Activated CD4-positive, alpha-beta memory T cell treated with anti-CD3 and anti-CD28 coated beads for 36 hours (primary cell): ENCODE measurements at regions of chr5 and their contacts with region 1.

Region 1: GRCh38 chr5:151651997-151652645 is 34.6 kb downstream of the SPARC start:
- DNase-seq: peak; percentile 86
- H3K4me3 Mint-ChIP-seq: no peak overlapping the region
- H3K27ac Mint-ChIP-seq: no peak overlapping the region
- H3K4me1 Mint-ChIP-seq: peaks cover 5% of the 10 kb centered on the region
- H3K27me3 Mint-ChIP-seq: no peaks in the 10 kb centered on the region

Region 2: DNA sequence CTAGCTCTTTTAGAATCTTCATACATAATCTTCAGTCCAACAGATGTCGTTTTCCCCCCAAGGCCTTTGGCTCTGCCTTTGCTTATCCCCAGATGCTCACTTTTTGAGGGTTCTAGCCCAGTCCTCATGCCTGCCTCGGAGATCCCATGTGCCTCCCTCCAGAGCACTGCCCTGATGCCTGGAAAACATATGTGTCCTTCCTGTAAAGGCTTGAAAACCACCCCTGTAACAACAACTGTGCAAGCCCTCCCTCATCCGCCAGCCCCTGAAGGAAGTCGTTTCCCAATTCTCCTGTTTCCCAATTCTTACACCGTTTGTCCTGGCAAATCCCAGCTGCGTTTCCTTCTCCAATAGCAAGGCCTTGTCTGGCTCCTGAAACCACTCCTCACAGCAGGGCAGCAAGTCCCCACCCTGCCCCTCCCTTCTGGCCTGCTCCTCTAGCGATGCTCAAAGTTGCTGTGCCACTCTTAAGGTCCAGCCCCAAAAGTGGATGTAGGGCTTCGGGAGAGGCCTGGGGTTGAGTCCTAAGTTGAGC is 152.6 kb before region 1 on chr5:
- CTCF ChIA-PET with region 1: interaction called, 7 read pairs
- POLR2A ChIA-PET with region 1: no interaction called
- intact Hi-C with region 1: loop called (anchors 2 kb)
- DNase-seq: no peak
- H3K4me3 Mint-ChIP-seq: no peak overlapping the region
- H3K27ac Mint-ChIP-seq: no peak overlapping the region
- H3K4me1 Mint-ChIP-seq: peaks cover 5% of the 10 kb centered on the region
- H3K27me3 Mint-ChIP-seq: no peaks in the 10 kb centered on the region

Region 3: DNA sequence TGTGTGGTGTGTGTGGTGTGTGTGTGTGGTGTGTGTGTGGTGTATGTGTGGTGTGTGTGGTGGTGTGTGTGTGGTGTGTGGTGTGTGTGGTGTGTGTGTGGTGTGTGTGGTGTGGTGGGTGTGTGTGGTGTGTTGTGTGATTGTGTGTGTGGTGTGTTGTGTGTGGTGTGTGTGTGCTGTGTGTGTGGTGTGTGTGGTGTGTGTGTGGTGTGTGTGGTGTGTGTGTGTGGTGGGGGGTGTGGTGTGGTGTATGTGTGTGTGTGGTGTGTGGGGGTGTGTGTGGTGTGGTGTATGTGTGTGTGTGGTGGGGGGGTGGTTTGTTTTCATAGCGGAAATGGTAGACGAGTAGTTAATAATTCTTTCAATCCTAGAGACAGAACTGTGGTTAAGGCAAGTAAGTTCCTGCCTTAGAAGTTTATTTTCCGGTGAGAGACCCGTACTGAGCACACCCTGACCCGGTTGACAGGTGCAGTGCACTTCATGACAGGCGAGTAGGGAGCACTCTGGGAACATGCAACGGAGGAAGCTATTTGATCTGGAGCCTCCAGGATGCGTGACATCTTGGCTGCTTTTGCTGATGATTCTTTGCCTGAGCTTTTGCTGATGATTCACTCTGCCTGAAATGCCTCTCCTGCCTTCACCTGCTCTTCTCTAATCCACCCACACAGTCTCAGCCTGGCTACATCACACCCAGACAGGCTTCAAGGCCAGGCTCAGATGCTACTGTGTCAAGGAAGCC is 39.3 kb before region 1 on chr5:
- CTCF ChIA-PET with region 1: interaction called, 12 read pairs
- POLR2A ChIA-PET with region 1: no interaction called
- intact Hi-C with region 1: no loop called
- DNase-seq: peak; percentile 75
- H3K4me3 Mint-ChIP-seq: peak overlapping the region; percentile 24
- H3K27ac Mint-ChIP-seq: peak overlapping the region; percentile 77
- H3K4me1 Mint-ChIP-seq: peaks cover 38% of the 10 kb centered on the region
- H3K27me3 Mint-ChIP-seq: no peaks in the 10 kb centered on the region

Region 4: DNA sequence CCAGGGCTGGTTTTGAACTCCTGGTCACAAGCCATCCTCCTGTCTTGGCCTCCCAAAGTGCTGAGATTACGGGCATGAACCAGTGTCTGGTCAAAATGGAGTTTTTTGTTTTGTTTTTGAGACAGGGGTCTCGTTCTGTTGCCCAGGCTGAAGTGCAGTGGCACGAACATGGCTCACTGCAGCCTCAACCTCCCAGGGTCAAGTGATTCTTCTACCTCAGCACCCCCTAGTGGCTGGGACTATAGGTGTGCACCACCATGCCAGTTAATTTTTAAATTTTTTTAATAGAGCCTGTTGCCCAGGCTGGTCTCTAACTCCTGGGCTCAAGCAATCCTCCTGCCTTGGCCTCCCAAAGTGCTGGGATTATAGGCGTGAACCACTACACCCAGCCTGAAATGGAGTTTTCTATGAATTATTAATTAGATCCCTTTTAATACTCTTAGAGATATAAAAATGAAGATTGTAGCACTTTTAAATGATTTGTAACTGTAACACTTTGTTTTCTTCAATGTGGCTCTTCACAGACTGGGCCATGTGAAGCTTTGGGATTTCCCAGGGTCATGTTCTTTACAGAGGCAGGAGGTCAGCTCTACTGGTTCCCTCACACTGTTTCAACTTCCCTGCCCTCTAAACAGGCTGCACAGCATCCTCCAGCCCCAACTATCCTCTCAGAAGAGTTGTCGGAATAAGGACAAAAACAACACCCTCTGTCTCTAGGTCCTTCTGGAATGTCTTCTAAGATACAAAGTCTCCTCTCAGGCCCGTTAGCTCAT is 67.3 kb after region 1 on chr5:
- CTCF ChIA-PET with region 1: interaction called, 11 read pairs
- POLR2A ChIA-PET with region 1: no interaction called
- intact Hi-C with region 1: no loop called
- DNase-seq: peak; percentile 36
- H3K4me3 Mint-ChIP-seq: no peak overlapping the region
- H3K27ac Mint-ChIP-seq: no peak overlapping the region
- H3K4me1 Mint-ChIP-seq: peaks cover 10% of the 10 kb centered on the region
- H3K27me3 Mint-ChIP-seq: no peaks in the 10 kb centered on the region